Activated T-helper 1 cell treated with anti-CD3 and anti-CD28 coated beads, Interleukin-12 subunit alpha, Interleukin-12 subunit beta, Interleukin-2, Interleukin-4 antibody, amounts not matched to agents 30 ng/mL and 10 ng/mL and 1 ng/mL, durations not matched to agents 14 hours and 24 hours and 36 hours (primary cell): ENCODE measurements at regions of chr10 and their contacts with region 1.

Region 1: DNA sequence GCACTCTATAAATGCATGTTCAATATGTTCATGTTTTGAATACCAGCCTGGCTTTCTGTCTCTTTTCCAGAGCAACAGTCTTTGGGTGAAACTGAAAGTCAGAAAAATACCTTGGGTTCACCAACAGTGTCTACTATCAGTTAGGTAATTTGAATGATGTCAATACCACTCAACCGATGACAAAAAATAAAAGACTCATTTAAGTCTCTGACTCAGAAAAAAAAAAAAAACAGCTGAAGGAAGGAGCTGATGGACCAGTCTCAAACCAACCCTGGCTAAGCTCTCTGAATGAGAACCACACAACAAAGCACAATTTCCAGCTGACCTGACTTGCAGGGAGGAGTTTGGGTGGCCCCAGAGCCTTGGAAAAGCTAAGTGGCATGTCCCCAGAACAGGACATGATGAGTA is 42.5 kb downstream of the ABLIM1 start:
- DNase-seq: no peak
- H3K4me3 Mint-ChIP-seq: peak overlapping the region; percentile 11
- H3K27ac Mint-ChIP-seq: peak overlapping the region; percentile 36
- H3K4me1 Mint-ChIP-seq: peaks cover 22% of the 10 kb centered on the region
- H3K27me3 Mint-ChIP-seq: peaks cover 9% of the 10 kb centered on the region

Region 2: DNA sequence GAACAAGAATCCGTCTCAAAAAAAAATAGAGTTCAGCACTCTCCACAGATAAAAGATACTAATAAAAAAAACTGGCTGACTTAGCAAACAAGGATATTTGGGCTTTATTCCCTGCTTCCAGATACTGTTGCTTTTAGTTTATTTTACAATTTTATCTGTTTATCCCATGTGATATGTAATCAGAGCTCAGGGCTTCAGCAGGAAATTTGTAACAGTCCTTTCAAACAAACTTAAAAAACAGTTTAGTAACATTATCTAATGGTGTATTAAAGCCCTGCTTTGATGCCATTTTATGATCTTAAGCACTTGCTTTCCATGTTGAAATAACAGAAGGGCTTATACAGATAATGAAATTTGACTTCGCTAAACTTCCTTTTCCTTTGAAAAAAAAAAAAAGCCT is 789.8 kb before region 1 on chr10:
- intact Hi-C with region 1: no loop called
- DNase-seq: no peak
- H3K4me3 Mint-ChIP-seq: no peak overlapping the region
- H3K27ac Mint-ChIP-seq: no peak overlapping the region
- H3K4me1 Mint-ChIP-seq: no peaks in the 10 kb centered on the region
- H3K27me3 Mint-ChIP-seq: peaks cover 16% of the 10 kb centered on the region

Region 3: GRCh38 chr10:114173921-114174694 is 441.5 kb before region 1 on chr10 and contains the start of gene CCDC186:
- intact Hi-C with region 1: loop called (anchors 10 kb)
- DNase-seq: peak; percentile 96
- H3K4me3 Mint-ChIP-seq: peak within 1 kb of the TSS; percentile 95
- H3K27ac Mint-ChIP-seq: peak within 1 kb of the TSS; percentile 91
- H3K4me1 Mint-ChIP-seq: peaks cover 35% of the 10 kb centered on the region
- H3K27me3 Mint-ChIP-seq: peaks cover 12% of the 10 kb centered on the region
- total RNA-seq, gene CCDC186: 12.1 and 13.0 TPM in 2 replicates

Region 4: GRCh38 chr10:114499630-114500190 is 115.9 kb before region 1 on chr10:
- intact Hi-C with region 1: loop called (anchors 2 kb)
- DNase-seq: peak; percentile 59
- H3K4me3 Mint-ChIP-seq: peak overlapping the region; percentile 63
- H3K27ac Mint-ChIP-seq: peak overlapping the region; percentile 85
- H3K4me1 Mint-ChIP-seq: peaks cover 81% of the 10 kb centered on the region
- H3K27me3 Mint-ChIP-seq: no peaks in the 10 kb centered on the region

Region 5: DNA sequence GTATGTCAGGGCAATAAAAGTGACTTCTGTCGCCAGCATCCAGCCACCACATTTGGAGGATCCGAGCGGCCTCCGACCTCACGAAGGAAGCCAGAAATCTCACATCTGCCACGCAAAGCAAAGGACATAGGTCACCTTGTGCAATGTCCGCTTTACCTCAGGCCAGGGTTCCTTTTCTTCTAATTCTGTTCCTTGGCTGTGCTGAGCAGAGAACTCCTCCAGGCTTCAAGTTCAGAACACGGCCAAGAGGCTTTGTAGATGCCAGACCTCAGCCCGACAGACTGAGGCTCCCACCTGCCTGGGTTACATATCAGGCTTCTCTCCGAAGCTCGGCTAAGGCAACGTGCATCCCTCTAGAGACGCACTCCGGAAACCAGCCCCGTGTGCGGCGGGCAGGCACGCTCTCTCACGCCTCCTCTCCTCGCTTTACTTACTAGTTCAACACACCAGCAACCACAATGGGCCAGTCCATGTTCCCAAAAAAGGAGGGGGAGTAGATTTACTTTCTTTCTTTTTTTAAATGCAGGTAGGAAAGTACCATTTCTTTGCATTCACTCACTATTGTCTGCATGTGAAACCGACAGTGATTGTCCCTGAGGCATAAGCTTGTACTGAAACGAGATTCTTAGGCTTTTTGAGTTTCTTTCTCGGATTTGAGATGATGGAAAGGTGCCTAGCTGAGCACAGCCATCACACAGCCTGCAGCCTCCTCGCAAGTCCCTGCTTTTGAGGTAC is 88.9 kb before region 1 on chr10:
- intact Hi-C with region 1: loop called (anchors 1 kb)
- DNase-seq: peak; percentile 82
- H3K4me3 Mint-ChIP-seq: peak overlapping the region; percentile 87
- H3K27ac Mint-ChIP-seq: peak overlapping the region; percentile 92
- H3K4me1 Mint-ChIP-seq: peaks cover 58% of the 10 kb centered on the region
- H3K27me3 Mint-ChIP-seq: peaks cover 2% of the 10 kb centered on the region

Region 6: DNA sequence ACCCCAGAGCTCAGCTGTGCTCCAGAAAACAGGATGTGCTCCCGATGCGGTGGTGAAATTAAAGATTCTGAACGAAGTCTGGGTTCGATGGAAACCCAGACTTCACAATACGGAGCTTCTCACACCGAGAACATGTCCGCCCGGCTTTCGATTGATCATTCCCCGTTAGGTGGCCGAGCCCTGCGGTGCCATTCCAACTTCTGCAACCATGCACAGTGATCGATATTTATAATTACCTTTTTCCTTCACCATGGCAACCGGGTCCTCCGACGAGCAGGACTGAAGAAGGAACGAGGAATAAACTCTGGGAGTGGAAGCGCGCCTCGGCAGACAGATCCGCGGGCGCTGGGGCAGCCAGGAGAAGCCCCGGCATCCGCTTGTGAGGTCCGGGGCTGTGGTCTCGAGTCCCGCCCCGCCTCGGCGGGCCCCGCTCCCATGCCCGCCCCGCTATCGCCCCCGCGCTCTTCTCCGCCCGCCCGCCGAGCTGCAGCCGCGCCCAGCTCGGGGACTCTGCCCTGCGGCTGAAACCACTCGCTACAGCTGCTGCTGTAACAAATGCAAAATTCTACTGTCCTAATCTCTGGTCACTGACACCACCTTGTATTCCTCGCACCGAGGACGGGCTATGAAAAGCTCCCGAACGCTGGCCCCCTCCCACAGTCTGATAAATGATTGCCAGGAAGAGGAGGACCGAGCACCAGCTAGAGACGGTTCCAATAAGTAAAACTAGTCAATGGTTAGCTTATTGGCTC is 16.2 kb after region 1 on chr10:
- intact Hi-C with region 1: loop called (anchors 2 kb)
- DNase-seq: no peak
- H3K4me3 Mint-ChIP-seq: peak overlapping the region; percentile 87
- H3K27ac Mint-ChIP-seq: no peak overlapping the region
- H3K4me1 Mint-ChIP-seq: peaks cover 33% of the 10 kb centered on the region
- H3K27me3 Mint-ChIP-seq: peaks cover 52% of the 10 kb centered on the region

Region 7: GRCh38 chr10:114654849-114655575 is 39.4 kb after region 1 on chr10:
- intact Hi-C with region 1: loop called (anchors 1 kb)
- DNase-seq: no peak
- H3K4me3 Mint-ChIP-seq: no peak overlapping the region
- H3K27ac Mint-ChIP-seq: no peak overlapping the region
- H3K4me1 Mint-ChIP-seq: peaks cover 6% of the 10 kb centered on the region
- H3K27me3 Mint-ChIP-seq: peaks cover 3% of the 10 kb centered on the region

Region 8: DNA sequence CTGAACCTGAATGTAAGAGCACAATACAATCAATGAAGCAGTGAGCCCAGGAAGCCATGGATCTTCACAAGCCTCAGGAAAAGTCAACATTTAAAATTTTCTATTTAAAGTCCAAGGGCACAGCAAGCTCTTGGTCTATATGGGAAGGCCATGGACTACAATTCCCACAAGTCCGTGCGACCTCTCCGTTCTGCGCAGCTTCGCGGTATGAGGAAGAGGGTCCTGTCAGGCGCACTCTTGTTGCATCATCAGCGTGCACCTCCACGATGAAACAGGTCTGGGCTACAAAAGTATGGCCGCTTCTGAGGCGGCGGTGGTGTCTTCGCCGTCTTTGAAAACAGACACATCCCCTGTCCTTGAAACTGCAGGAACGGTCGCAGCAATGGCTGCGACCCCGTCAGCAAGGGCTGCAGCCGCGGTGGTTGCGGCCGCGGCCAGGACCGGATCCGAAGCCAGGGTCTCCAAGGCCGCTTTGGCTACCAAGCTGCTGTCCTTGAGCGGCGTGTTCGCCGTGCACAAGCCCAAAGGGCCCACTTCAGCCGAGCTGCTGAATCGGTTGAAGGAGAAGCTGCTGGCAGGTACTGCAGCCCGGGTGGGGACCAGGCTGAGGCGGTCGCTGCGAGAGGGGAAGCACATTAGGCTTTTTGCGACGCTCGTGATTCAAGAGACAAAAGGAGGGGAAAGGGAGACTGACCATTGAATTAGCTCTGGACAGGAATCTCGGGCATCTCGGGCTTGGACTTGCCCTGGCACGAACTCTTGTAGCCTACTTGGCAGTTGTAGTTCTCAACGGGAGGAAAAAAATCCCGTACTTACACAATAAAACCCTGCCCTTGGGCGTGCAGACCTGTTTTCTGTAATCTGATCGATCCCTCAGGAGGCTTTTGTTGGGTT is 322.6 kb after region 1 on chr10 and contains the start of gene TRUB1:
- intact Hi-C with region 1: loop called (anchors 10 kb)
- DNase-seq: peak; percentile 83
- H3K4me3 Mint-ChIP-seq: peak within 1 kb of the TSS; percentile 99
- H3K27ac Mint-ChIP-seq: peak within 1 kb of the TSS; percentile 84
- H3K4me1 Mint-ChIP-seq: peaks cover 35% of the 10 kb centered on the region
- H3K27me3 Mint-ChIP-seq: no peaks in the 10 kb centered on the region
- total RNA-seq, gene TRUB1: 21.6 TPM in 2 replicates